ENCODE measurements at regions of chr12 and their contacts with region 1.

Region 1: GRCh38 chr12:94434171-94434570 is 25.5 kb downstream of the CEP83 start:
- DNase-seq: peak; percentile 11
- ATAC-seq: no peak
- H3K4me3 ChIP-seq: no peak overlapping the region
- H3K27ac ChIP-seq: no peak overlapping the region
- H3K4me1 ChIP-seq: no peaks in the 10 kb centered on the region
- H3K27me3 ChIP-seq: no peaks in the 10 kb centered on the region
- CTCF ChIP-seq: peak; percentile 31
- POLR2A ChIP-seq: no peak
- RAD21 ChIP-seq: peak; percentile 41

Region 2: GRCh38 chr12:94133964-94134795 is 300.0 kb before region 1 on chr12:
- CTCF ChIA-PET with region 1: no interaction called
- POLR2A ChIA-PET with region 1: no interaction called
- dilution Hi-C with region 1: no loop called
- in situ Hi-C with region 1: loop called (anchors 5 kb)
- intact Hi-C with region 1: loop called (anchors 1 kb)
- DNase-seq: peak; percentile 62
- ATAC-seq: peak; percentile 87
- H3K4me3 ChIP-seq: no peak overlapping the region
- H3K27ac ChIP-seq: no peak overlapping the region
- H3K4me1 ChIP-seq: no peaks in the 10 kb centered on the region
- H3K27me3 ChIP-seq: peaks cover 20% of the 10 kb centered on the region
- CTCF ChIP-seq: peak; percentile 78
- POLR2A ChIP-seq: no peak
- RAD21 ChIP-seq: peak; percentile 81

Region 3: GRCh38 chr12:94139816-94140215 is 294.4 kb before region 1 on chr12:
- CTCF ChIA-PET with region 1: no interaction called
- POLR2A ChIA-PET with region 1: no interaction called
- dilution Hi-C with region 1: no loop called
- in situ Hi-C with region 1: loop called (anchors 5 kb)
- intact Hi-C with region 1: loop called (anchors 1 kb)
- DNase-seq: no peak
- ATAC-seq: no peak
- H3K4me3 ChIP-seq: no peak overlapping the region
- H3K27ac ChIP-seq: no peak overlapping the region
- H3K4me1 ChIP-seq: no peaks in the 10 kb centered on the region
- H3K27me3 ChIP-seq: peaks cover 40% of the 10 kb centered on the region
- CTCF ChIP-seq: no peak
- POLR2A ChIP-seq: no peak
- RAD21 ChIP-seq: no peak

Region 4: DNA sequence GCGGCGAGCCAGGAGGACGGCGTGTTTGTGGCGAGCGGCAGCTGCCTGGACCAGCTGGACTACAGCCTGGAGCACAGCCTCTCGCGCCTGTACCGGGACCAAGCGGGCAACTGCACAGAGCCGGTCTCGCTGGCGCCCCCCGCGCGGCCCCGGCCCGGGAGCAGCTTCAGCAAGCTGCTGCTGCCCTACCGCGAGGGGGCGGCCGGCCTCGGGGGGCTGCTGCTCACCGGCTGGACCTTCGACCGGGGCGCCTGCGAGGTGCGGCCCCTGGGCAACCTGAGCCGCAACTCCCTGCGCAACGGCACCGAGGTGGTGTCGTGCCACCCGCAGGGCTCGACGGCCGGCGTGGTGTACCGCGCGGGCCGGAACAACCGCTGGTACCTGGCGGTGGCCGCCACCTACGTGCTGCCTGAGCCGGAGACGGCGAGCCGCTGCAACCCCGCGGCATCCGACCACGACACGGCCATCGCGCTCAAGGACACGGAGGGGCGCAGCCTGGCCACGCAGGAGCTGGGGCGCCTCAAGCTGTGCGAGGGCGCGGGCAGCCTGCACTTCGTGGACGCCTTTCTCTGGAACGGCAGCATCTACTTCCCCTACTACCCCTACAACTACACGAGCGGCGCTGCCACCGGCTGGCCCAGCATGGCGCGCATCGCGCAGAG is 284.9 kb before region 1 on chr12:
- CTCF ChIA-PET with region 1: interaction called, 9 read pairs
- POLR2A ChIA-PET with region 1: no interaction called
- dilution Hi-C with region 1: no loop called
- in situ Hi-C with region 1: no loop called
- intact Hi-C with region 1: loop called (anchors 1 kb)
- DNase-seq: peak; percentile 23
- ATAC-seq: peak; percentile 64
- H3K4me3 ChIP-seq: peak overlapping the region; percentile 67
- H3K27ac ChIP-seq: no peak overlapping the region
- H3K4me1 ChIP-seq: no peaks in the 10 kb centered on the region; the same call in none of the 2 replicates
- H3K27me3 ChIP-seq: peaks cover 88% of the 10 kb centered on the region
- CTCF ChIP-seq: 0 out of 2 replicates have a peak, but pooled peaks have one; percentile 18
- POLR2A ChIP-seq: no peak
- RAD21 ChIP-seq: no peak

Measured in IMR-90 (cell line).